Dendritic cell treated with granulocyte-macrophage colony-stimulating factor and Interleukin-4, amounts not matched to agents 40 ng/mL and 50 ng/mL, for 4 days (primary cell): ENCODE measurements at regions of chr9 and their contacts with region 1.

Region 1: GRCh38 chr9:28853477-28853876 is 1280.2 kb upstream of the C9orf72 start:
- H3K4me3 Mint-ChIP-seq: no peak overlapping the region
- H3K27ac Mint-ChIP-seq: no peak overlapping the region
- H3K4me1 Mint-ChIP-seq: no peaks in the 10 kb centered on the region
- H3K27me3 Mint-ChIP-seq: no peaks in the 10 kb centered on the region

Region 2: DNA sequence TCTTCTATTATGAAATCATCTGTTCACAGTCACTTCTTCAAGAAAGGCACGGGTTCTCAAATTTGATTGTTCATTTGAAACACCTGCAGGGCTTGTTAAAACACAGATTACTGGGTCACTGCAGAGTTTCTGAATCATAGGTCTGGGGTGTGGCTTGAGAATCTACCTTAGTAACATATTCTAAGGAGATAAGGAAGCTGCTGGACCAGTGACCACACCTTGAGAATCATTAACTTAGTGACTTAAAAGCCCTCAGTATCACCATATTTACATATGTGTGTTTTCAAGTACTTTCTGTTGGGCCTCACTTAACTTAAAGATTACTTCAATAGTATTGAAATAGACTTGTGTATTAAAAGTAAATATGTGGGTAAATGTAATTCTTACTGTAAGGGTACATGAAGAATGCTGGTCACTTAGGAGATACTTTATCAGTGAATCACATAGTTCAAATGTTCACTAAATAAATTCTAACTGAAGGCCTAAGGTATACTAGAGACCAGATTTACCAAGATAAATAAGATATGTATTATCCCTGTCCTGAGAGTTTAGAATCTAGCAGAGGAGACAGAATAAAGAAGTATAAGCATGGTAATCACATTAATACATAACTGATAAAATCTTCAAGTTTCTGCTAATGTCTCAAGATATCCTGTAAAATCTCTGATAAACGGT is 61.9 kb after region 1 on chr9:
- intact Hi-C with region 1: loop called (anchors 10 kb)
- H3K4me3 Mint-ChIP-seq: no peak overlapping the region
- H3K27ac Mint-ChIP-seq: no peak overlapping the region
- H3K4me1 Mint-ChIP-seq: no peaks in the 10 kb centered on the region
- H3K27me3 Mint-ChIP-seq: no peaks in the 10 kb centered on the region

Region 3: GRCh38 chr9:28967226-28967625 is 113.7 kb after region 1 on chr9:
- intact Hi-C with region 1: no loop called
- H3K4me3 Mint-ChIP-seq: no peak overlapping the region
- H3K27ac Mint-ChIP-seq: no peak overlapping the region
- H3K4me1 Mint-ChIP-seq: no peaks in the 10 kb centered on the region
- H3K27me3 Mint-ChIP-seq: no peaks in the 10 kb centered on the region